CD4-positive, alpha-beta T cell (primary cell): ENCODE measurements at regions of chr1 and their contacts with region 1.

Region 1: GRCh38 chr1:64242895-64243756 is 39.7 kb downstream of the UBE2U start:
- DNase-seq: peak in 3 of 14 experiments; percentile 31 to 34 (median 34)
- ATAC-seq: no peak
- H3K4me3 ChIP-seq: peak overlapping the region; percentile 17
- H3K4me3 Mint-ChIP-seq: peak overlapping the region; percentile 73
- H3K27ac ChIP-seq: no peak overlapping the region
- H3K27ac Mint-ChIP-seq: no peak overlapping the region
- H3K4me1 ChIP-seq: peaks cover 8% of the 10 kb centered on the region
- H3K4me1 Mint-ChIP-seq: peaks cover 38% of the 10 kb centered on the region
- H3K27me3 ChIP-seq: peaks cover 2 to 5% of the 10 kb centered on the region in 2 experiments
- H3K27me3 Mint-ChIP-seq: peaks cover 19% of the 10 kb centered on the region
- CTCF ChIP-seq: peak; percentile 58

Region 2: DNA sequence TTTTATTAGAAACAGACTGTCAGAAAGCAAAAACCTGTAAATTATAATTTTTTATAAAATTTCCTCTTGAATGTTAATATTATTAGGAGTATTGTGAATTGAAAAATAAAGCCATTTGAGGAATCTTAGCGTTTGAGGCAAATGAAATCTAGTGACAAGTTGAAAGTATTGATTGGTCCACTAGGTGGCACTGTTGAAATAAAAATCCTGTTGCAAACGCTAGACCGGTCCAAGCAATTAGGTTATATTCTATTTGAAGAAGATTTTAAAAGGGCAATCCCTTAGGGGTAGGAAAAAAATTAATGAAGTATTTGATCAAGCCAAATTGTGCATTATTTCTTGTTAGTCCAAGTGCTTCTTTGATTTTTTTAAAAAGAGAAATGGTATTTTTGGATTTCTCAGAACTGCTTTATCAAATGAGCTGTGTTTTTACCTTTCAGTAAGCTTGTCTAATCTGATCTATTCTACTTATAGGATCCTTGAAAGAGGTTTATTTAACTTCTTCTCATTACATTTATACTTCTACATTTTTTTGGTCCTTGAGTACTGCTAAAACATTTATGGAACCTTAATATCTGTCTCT is 1401.4 kb before region 1 on chr1:
- CTCF ChIA-PET with region 1: no interaction called
- POLR2A ChIA-PET with region 1: no interaction called
- intact Hi-C with region 1: loop called in 1 of 2 experiments (anchors 5 kb)
- DNase-seq: peak in 4 of 14 experiments; percentile 29 to 73 (median 64)
- ATAC-seq: peak; percentile 60
- H3K4me3 ChIP-seq: no peak overlapping the region
- H3K4me3 Mint-ChIP-seq: no peak overlapping the region
- H3K27ac ChIP-seq: no peak overlapping the region
- H3K27ac Mint-ChIP-seq: no peak overlapping the region
- H3K4me1 ChIP-seq: no peaks in the 10 kb centered on the region
- H3K4me1 Mint-ChIP-seq: no peaks in the 10 kb centered on the region
- H3K27me3 ChIP-seq: no peaks in the 10 kb centered on the region
- H3K27me3 Mint-ChIP-seq: no peaks in the 10 kb centered on the region
- CTCF ChIP-seq: peak; percentile 90

Region 3: DNA sequence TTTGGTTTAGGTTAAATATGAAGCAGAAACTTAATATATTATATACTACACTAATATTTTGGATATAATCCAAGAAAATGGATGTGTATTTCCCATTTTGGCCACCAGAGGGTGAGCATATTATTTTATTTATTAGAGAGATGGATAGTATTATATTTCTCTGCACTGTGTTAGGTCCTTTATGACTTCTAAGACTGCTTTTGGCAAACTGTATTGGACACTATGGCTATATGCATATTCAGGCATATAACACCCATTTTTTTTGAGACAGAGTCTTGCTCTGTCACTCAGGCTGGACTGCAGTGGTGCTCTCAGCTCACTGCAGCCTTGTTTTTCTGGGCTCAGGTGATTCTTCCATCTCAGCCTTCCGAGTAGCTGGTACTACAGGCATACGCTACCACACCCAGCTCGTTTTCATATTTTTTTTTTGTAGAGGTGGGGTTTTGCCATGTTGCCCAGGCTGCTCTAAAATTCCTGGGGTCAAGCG is 667.7 kb before region 1 on chr1:
- CTCF ChIA-PET with region 1: no interaction called
- POLR2A ChIA-PET with region 1: no interaction called
- intact Hi-C with region 1: loop called in 1 of 2 experiments (anchors 2 kb)
- DNase-seq: peak in 4 of 14 experiments; percentile 19 to 50 (median 44)
- ATAC-seq: no peak
- H3K4me3 ChIP-seq: no peak overlapping the region
- H3K4me3 Mint-ChIP-seq: no peak overlapping the region
- H3K27ac ChIP-seq: no peak overlapping the region
- H3K27ac Mint-ChIP-seq: no peak overlapping the region
- H3K4me1 ChIP-seq: no peaks in the 10 kb centered on the region
- H3K4me1 Mint-ChIP-seq: no peaks in the 10 kb centered on the region
- H3K27me3 ChIP-seq: no peaks in the 10 kb centered on the region
- H3K27me3 Mint-ChIP-seq: no peaks in the 10 kb centered on the region
- CTCF ChIP-seq: peak; percentile 87

Region 4: DNA sequence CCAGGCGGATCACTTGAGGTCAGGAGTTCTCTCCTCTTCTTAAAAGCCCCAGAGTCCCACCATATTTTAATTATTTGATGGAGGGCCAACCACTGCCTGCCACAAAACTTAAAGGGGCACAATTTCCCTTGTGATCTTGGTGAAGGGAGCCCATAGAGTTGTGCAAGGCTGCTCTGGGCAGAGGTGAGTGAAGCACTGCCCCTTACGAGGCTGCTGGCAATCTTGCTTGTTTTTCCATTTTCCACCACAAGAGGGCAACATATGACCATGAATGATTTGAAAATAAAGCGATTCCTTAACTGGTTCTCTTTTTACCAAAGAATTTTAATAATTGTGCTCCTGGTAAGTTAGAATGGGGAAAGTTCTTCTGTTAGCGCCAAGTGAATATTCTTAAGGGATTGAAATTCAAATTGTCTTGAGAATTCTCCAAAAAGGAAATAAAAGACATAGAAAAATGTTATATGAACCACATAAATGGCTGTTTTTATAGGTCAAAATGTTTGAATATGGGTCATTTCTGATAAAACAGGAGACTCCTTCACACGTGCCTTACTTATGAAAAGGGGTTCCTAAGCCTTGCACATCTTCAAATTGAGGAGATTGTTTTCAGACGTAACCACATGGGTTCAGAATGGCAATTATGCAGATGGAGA is 627.2 kb before region 1 on chr1:
- CTCF ChIA-PET with region 1: interaction called, 3 read pairs
- POLR2A ChIA-PET with region 1: no interaction called
- intact Hi-C with region 1: loop called (anchors 1 kb)
- DNase-seq: peak; percentile 21 to 85 (median 46)
- ATAC-seq: peak; percentile 62
- H3K4me3 ChIP-seq: no peak overlapping the region
- H3K4me3 Mint-ChIP-seq: no peak overlapping the region
- H3K27ac ChIP-seq: no peak overlapping the region
- H3K27ac Mint-ChIP-seq: no peak overlapping the region
- H3K4me1 ChIP-seq: peaks cover 3% of the 10 kb centered on the region
- H3K4me1 Mint-ChIP-seq: no peaks in the 10 kb centered on the region
- H3K27me3 ChIP-seq: no peaks in the 10 kb centered on the region
- H3K27me3 Mint-ChIP-seq: no peaks in the 10 kb centered on the region
- CTCF ChIP-seq: peak; percentile 90

Region 5: DNA sequence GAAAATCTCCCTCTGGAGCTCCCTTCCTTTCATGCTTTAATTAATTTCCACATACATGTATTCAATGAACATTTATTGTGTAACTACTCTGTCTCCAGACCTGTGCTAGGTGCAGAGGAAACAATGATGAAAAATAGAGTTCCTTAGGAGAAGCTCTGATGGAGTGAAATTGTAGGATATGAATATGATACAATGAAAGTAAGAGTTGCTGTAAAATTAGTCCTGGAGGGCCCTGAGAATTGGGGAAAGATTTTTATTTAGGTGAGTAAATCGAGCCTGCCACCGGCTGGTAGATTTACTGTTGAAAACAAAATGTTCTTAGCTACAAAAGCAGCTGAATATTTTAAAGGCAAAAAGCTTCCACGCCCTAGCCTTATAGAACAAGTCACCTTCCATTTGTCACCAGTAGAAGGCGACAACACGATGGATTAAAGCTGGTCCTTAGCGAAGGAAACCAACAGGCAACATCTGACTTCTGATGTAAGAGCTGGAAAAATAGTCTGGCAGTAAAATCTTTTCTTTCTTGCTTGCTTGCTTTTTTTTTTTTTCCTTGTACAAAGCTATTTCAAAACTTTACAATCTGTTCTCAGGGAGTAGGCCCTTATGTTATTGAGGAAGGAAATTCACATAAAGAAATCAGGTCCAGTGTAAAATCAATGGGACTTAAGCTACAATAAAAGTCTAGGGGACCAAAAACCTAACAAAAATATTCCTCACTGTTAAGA is 551.3 kb before region 1 on chr1:
- CTCF ChIA-PET with region 1: no interaction called
- POLR2A ChIA-PET with region 1: no interaction called
- intact Hi-C with region 1: loop called (anchors 2 kb)
- DNase-seq: peak in 5 of 14 experiments; percentile 9 to 57 (median 31)
- ATAC-seq: no peak
- H3K4me3 ChIP-seq: no peak overlapping the region
- H3K4me3 Mint-ChIP-seq: no peak overlapping the region
- H3K27ac ChIP-seq: no peak overlapping the region
- H3K27ac Mint-ChIP-seq: no peak overlapping the region
- H3K4me1 ChIP-seq: no peaks in the 10 kb centered on the region
- H3K4me1 Mint-ChIP-seq: peaks cover 8% of the 10 kb centered on the region
- H3K27me3 ChIP-seq: no peaks in the 10 kb centered on the region
- H3K27me3 Mint-ChIP-seq: peaks cover 10% of the 10 kb centered on the region
- CTCF ChIP-seq: peak; percentile 66

Region 6: DNA sequence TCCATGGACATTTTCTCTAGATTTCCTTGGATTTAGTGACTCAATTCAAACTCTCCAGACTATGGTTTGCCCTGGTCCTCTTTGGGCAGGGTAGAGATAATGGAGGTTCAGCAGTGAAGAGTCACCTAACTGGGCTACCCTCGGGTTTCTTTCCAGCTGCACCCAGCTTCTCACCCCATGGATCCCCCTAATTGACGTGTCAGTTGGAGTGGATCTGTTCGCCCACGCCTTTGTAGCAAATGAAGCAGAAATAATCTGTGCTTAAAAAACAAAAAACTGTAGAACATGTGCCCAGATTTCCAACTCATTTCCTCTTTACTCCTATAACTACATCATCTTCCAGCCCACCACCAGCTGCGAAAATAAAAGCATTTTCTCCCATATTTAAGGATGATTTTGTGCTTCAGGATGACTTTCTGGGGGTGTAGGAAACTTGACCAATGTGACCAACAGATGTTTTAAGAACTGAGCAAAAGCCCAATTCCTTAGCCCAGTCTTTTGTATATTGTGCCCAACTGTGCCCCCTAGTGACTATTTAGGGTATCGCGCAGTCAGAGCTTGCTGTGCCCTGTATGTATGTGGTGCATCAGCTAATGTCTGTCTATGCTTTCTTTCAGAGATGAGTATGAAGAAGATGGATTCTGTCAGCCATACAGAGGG is 106.2 kb before region 1 on chr1:
- CTCF ChIA-PET with region 1: no interaction called
- POLR2A ChIA-PET with region 1: no interaction called
- intact Hi-C with region 1: loop called in 1 of 2 experiments (anchors 10 kb)
- DNase-seq: peak; percentile 45 to 77 (median 59)
- ATAC-seq: peak; percentile 64
- H3K4me3 ChIP-seq: no peak overlapping the region
- H3K4me3 Mint-ChIP-seq: no peak overlapping the region
- H3K27ac ChIP-seq: no peak overlapping the region
- H3K27ac Mint-ChIP-seq: no peak overlapping the region
- H3K4me1 ChIP-seq: no peaks in the 10 kb centered on the region
- H3K4me1 Mint-ChIP-seq: no peaks in the 10 kb centered on the region
- H3K27me3 ChIP-seq: no peaks in the 10 kb centered on the region
- H3K27me3 Mint-ChIP-seq: no peaks in the 10 kb centered on the region
- CTCF ChIP-seq: peak; percentile 73